Breast epithelium (tissue), 4 donors: ENCODE measurements at regions of chr3 and their contacts with region 1.

Region 1: DNA sequence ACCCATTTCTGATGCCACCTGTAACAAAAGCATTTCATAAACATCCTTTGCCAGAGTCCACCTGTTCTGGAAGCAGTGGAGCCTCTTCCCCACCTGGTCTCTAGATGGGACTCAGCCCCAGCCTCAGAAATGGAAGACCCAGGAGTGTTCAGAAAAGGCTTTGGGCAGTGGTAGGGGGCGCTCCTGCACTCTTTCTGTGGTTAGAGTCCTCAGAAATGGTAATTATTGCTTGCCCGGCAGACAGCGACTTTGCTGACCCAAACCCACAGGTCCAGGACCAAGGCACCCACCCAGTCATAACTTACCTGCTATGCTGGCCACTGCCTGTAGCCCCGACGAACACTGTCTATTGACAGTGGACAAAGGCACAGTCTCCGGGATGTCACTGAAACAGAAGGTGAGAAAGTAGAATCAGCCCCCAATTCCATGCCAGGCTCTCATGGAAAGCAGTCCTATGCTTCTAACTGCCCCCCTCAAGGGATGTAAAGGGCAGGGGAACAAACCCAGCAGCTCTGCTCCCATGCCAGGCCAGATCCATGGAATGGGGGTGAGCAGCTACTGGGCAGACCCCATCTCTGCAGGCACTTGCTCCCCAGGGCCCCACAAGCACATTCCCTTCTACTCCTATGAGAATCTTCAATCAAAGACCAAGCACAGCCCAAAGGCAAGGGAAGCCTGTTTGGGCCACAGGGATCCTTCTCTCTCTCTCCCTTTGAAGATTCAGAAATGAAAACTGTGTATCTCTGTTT is 5.1 kb downstream of the ACAA1 start:
- DNase-seq: no peak
- H3K4me3 ChIP-seq: no peak overlapping the region
- H3K27ac ChIP-seq: no peak overlapping the region
- H3K4me1 ChIP-seq: peaks cover 0 to 22% of the 10 kb centered on the region in 2 donors
- H3K27me3 ChIP-seq: no peaks in the 10 kb centered on the region
- CTCF ChIP-seq: no peak
- POLR2A ChIP-seq: no peak

Region 2: DNA sequence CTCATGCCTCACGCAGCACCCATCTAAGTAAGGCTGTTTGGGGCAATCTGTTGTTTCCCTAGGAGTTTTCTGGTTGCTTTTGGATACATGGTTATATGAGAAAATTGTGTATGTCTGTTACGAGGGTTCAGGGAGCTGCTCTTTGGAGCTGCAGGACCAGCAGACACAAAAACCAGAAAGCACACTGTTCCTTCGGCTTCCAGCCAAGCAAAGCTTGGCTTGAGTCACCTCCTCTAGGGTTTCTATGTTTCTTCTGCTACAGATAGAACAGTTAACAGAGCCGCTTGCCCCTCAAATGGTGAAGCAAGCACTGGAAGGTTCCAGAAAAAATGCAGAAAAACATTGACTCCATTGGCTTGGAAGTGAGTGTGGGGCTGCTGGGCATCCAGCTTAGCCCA is 319.3 kb before region 1 on chr3:
- intact Hi-C with region 1: no loop called
- DNase-seq: no peak
- H3K4me3 ChIP-seq: no peak overlapping the region
- H3K27ac ChIP-seq: no peak overlapping the region
- H3K4me1 ChIP-seq: no peaks in the 10 kb centered on the region
- H3K27me3 ChIP-seq: no peaks in the 10 kb centered on the region
- CTCF ChIP-seq: no peak
- POLR2A ChIP-seq: no peak

Region 3: DNA sequence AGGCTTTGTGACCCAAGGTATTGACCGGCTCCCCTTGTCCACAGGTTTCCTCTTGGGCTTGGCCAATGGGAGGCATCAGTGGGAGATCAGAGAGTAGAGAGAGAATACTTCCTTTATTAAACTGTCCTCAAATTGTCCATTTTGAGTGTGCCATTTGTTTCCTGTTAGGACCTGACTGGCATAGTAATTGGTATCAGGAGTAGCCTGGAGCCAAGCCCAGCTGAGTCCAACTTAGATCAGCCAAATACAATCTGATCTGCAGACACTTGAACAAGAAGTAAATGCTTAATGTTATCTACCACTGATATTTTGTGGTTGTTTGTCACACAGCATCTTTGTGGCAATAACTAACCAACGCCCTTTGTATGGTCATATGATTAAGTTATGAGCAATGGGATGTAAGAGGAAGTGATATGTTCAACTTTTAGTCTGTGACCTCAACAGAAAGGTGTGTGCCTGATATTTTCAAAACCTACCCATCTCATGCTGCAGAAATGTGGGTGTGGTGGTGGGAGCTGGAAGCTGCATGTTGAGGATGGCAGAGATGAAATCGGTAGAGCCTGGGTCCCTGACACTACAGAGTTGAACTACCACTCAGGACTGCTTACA is 20.0 kb after region 1 on chr3:
- intact Hi-C with region 1: loop called (anchors 1 kb)
- DNase-seq: no peak
- H3K4me3 ChIP-seq: no peak overlapping the region
- H3K27ac ChIP-seq: no peak overlapping the region
- H3K4me1 ChIP-seq: no peaks in the 10 kb centered on the region
- H3K27me3 ChIP-seq: no peaks in the 10 kb centered on the region
- CTCF ChIP-seq: no peak
- POLR2A ChIP-seq: no peak

Region 4: DNA sequence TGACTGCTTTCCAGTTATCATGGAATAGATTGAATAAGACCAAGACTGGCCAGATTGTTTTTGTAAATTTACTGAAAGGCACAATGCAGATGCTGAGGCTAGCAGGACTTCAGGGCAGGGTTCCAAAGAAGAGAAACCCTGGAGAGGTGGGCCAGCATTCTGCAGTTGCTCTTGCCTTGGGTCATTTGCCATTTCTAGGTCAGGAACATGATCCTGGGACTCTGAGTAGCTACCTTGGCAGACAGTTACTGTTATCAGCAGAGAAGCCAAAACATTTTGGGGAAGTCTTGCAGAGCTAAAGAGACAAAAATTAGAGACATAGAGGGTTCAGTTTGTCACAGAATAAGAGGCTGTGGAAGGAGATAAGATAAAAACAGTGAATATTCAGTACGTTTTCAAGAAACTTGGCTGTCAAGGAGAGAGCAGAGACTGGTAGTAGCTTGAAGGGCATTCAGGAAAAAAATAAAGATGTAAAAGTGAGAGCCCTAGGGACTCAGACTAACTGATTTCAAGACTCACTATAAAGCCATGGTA is 1630.8 kb after region 1 on chr3:
- intact Hi-C with region 1: no loop called
- DNase-seq: no peak
- H3K4me3 ChIP-seq: no peak overlapping the region
- H3K27ac ChIP-seq: no peak overlapping the region
- H3K4me1 ChIP-seq: no peaks in the 10 kb centered on the region
- H3K27me3 ChIP-seq: no peaks in the 10 kb centered on the region
- CTCF ChIP-seq: no peak
- POLR2A ChIP-seq: no peak